ENCODE measurements at regions of chr15 and their contacts with region 1.

Region 1: GRCh38 chr15:51737280-51738017 is at the start of gene LYSMD2:
- DNase-seq: peak; percentile 63
- H3K4me3 Mint-ChIP-seq: peak within 1 kb of the TSS; percentile 77
- H3K27ac Mint-ChIP-seq: peak within 1 kb of the TSS; percentile 39
- H3K4me1 Mint-ChIP-seq: peaks cover 20% of the 10 kb centered on the region
- H3K27me3 Mint-ChIP-seq: no peaks in the 10 kb centered on the region
- CTCF ChIP-seq: no peak
- total RNA-seq, gene LYSMD2: 13.4 and 14.3 TPM in 2 replicates

Region 2: GRCh38 chr15:51622604-51623370 is 114.7 kb before region 1 on chr15 and contains the start of gene DMXL2:
- CTCF ChIA-PET with region 1: no interaction called
- POLR2A ChIA-PET with region 1: interaction called, 29 read pairs
- intact Hi-C with region 1: no loop called
- DNase-seq: peak; percentile 79
- H3K4me3 Mint-ChIP-seq: peak within 1 kb of the TSS; percentile 99
- H3K27ac Mint-ChIP-seq: peak within 1 kb of the TSS; percentile 90
- H3K4me1 Mint-ChIP-seq: peaks cover 27% of the 10 kb centered on the region
- H3K27me3 Mint-ChIP-seq: no peaks in the 10 kb centered on the region
- CTCF ChIP-seq: no peak
- total RNA-seq, gene DMXL2: 13.6 and 21.6 TPM in 2 replicates

Region 3: DNA sequence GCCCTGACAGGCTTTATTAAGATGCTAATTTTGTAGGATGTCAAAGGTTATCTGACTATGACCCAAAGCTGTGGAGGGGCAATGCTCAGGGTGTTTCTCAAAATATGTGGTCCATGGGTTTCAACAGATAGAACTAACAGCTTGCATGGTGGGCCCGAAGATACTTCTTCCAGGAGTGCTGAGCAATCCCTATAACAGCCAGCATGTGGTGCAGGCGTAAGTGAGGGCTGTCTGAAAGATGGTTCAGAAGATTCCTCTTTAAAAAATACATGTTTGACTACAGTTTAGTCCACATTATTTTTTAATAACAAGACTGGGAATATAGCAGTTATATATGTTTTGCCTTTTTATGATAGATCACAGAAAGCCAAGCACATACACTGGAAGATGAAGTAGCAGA is 48.6 kb before region 1 on chr15:
- CTCF ChIA-PET with region 1: interaction called, 4 read pairs
- POLR2A ChIA-PET with region 1: interaction called, 16 read pairs
- intact Hi-C with region 1: no loop called
- DNase-seq: no peak
- H3K4me3 Mint-ChIP-seq: no peak overlapping the region
- H3K27ac Mint-ChIP-seq: peak overlapping the region; percentile 39
- H3K4me1 Mint-ChIP-seq: peaks cover 15% of the 10 kb centered on the region
- H3K27me3 Mint-ChIP-seq: peaks cover 35% of the 10 kb centered on the region
- CTCF ChIP-seq: no peak

Region 4: DNA sequence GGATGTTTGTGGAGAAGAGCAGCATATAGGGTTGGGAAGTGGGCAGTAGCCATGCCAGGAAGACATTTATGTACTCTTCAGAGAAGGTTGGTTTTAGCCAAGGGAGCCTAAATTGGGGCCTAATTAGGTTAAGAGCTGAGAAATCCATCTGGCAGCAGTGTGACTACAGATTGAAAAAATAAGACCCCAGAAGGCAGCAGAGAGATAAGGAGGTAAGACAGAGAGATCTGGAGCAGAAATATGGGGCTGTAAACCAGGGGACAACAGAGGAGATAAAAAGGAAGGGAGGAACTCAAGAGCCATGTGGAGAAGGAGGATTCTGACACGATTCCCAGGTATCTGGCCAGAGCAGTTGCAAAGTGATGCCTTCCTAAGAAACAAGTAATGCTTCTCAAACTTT is 23.3 kb before region 1 on chr15:
- CTCF ChIA-PET with region 1: no interaction called
- POLR2A ChIA-PET with region 1: no interaction called
- intact Hi-C with region 1: no loop called
- DNase-seq: no peak
- H3K4me3 Mint-ChIP-seq: no peak overlapping the region
- H3K27ac Mint-ChIP-seq: no peak overlapping the region
- H3K4me1 Mint-ChIP-seq: no peaks in the 10 kb centered on the region
- H3K27me3 Mint-ChIP-seq: no peaks in the 10 kb centered on the region
- CTCF ChIP-seq: no peak

Region 5: DNA sequence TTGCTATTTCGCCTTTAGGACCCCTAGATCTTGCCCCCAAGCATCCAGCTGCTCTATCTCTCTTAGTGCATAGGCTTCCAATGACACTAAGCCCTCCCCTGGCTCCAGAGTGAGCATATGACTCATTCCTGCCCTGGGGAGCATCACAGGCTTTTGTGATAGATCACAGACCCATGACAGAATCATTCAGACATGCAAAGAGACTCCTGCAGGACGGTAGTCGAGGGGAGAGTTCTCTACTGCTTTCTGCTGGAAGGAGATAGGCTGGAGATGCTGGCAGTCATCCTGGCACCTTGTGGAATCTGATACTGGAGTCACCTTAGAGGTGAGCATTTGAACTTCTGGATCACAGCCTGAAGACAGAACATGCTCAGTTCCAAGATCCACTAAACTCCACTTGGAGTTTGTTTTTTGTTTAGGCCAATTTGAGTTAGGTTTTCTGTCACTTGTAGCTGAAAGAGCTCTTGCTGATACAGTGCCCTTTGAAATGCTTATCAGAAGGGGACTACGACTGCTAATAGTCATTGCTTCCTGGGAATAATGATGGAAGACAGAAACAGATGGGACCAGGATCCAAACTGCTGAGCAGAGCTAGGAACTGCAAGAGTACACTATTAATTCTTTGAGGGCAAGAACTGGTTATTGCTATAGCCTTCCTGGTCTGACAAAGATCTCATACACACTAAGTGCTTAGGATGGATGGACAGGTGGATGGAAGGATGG is 10.9 kb before region 1 on chr15:
- CTCF ChIA-PET with region 1: no interaction called
- POLR2A ChIA-PET with region 1: interaction called, 40 read pairs
- intact Hi-C with region 1: no loop called
- DNase-seq: peak; percentile 92
- H3K4me3 Mint-ChIP-seq: no peak overlapping the region
- H3K27ac Mint-ChIP-seq: no peak overlapping the region
- H3K4me1 Mint-ChIP-seq: peaks cover 31% of the 10 kb centered on the region
- H3K27me3 Mint-ChIP-seq: no peaks in the 10 kb centered on the region
- CTCF ChIP-seq: no peak

Region 6: DNA sequence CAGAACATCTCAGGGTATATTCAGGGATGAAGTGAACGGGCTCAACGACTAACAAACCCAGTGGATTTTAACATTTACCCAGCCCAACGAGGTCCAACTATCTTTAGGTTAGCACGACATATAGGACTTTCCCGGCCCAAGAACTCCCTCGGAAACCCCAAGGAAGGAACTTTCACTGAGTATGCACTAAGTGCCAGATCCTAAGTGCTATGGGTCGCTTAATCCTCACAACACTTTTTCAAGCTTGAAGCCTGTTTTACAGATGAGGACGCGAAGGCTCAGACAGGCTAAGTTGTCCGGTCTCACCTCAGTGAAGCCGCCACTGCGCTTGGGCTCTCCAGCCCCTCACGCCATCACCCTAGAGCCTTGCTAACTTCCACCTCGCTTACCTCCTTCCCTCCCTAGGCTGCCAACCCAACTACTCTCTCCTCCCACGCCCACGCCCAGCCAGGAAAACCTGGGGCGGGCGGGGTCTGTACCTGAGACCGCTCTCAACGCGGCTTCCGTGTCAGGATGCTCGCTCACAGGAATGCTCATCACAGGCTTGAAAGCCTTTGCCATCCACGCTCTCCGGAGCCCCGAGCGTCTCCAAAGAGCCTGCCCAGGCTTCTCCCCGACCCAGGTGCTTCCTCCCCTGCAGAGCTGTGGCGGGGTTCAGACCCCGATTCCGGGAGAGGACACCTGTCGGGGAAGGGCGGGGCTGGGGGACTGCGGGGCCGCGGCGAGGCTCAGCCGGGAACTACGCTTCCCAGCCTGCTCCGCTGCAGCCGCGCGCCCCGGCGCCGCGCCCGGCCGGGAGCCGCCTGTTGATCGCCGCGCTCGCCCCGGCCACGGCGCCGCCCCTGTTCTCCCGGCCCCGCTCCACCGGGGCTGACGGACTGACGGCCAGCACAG is 13.6 kb after region 1 on chr15 and contains the start of gene TMOD2:
- CTCF ChIA-PET with region 1: interaction called, 3 read pairs
- POLR2A ChIA-PET with region 1: interaction called, 69 read pairs
- intact Hi-C with region 1: no loop called
- DNase-seq: no peak
- H3K4me3 Mint-ChIP-seq: peak within 1 kb of the TSS; percentile 72
- H3K27ac Mint-ChIP-seq: no peak within 1 kb of the TSS
- H3K4me1 Mint-ChIP-seq: peaks cover 10% of the 10 kb centered on the region
- H3K27me3 Mint-ChIP-seq: peaks cover 25% of the 10 kb centered on the region
- CTCF ChIP-seq: no peak
- total RNA-seq, gene TMOD2: 2.8 and 5.3 TPM in 2 replicates

Region 7: GRCh38 chr15:51758645-51759044 is 21.2 kb after region 1 on chr15:
- CTCF ChIA-PET with region 1: no interaction called
- POLR2A ChIA-PET with region 1: interaction called, 69 read pairs
- intact Hi-C with region 1: no loop called
- DNase-seq: peak; percentile 48
- H3K4me3 Mint-ChIP-seq: no peak overlapping the region
- H3K27ac Mint-ChIP-seq: no peak overlapping the region
- H3K4me1 Mint-ChIP-seq: peaks cover 17% of the 10 kb centered on the region
- H3K27me3 Mint-ChIP-seq: peaks cover 2% of the 10 kb centered on the region
- CTCF ChIP-seq: no peak

Region 8: DNA sequence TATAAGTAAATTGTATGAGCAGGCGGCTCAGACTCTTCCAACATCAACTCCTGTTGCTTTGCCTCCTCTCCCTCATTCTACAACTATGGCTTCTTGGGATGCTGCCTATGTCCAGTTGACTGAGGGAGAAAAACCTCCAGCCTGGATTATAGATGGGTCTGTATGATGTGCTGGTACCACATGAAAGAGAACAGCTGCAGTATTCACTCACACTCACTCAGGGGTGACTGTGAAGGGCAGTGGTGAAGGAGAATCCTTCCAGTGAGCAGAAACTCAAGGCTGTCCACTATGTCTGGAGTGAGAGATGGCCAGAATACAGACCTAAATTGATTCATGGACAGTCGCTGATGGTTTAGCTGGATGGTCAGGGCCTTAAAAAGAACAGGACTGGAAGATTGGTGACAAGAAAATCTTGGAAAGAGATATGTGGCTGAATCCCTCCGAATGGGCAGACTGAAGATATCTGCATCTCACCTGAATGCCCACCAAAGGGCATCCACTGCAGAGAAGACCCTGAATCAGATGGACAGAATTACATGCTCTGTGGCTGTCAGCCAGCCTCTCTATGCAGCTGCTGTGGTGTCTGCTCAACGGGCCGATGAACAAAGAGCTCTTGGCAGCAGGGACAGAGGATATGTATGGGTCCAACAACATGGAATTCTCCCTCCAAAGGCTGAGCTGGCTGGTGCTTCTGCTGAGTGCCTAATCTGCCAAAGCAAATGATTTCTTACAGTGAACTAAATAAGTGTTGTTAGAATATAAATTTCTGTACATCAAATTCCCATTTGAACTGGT is 377.0 kb after region 1 on chr15:
- CTCF ChIA-PET with region 1: no interaction called
- POLR2A ChIA-PET with region 1: no interaction called
- intact Hi-C with region 1: no loop called
- DNase-seq: no peak
- H3K4me3 Mint-ChIP-seq: no peak overlapping the region
- H3K27ac Mint-ChIP-seq: no peak overlapping the region
- H3K4me1 Mint-ChIP-seq: peaks cover 5% of the 10 kb centered on the region
- H3K27me3 Mint-ChIP-seq: no peaks in the 10 kb centered on the region
- CTCF ChIP-seq: no peak

Measured in MCF 10A (cell line).